Activated CD4-positive, alpha-beta T cell treated with anti-CD3 and anti-CD28 coated beads, Interleukin-2, amount 10 ng/mL, durations not matched to agents 7 days and 5 days (primary cell): ENCODE measurements at regions of chr11 and their contacts with region 1.

Region 1: DNA sequence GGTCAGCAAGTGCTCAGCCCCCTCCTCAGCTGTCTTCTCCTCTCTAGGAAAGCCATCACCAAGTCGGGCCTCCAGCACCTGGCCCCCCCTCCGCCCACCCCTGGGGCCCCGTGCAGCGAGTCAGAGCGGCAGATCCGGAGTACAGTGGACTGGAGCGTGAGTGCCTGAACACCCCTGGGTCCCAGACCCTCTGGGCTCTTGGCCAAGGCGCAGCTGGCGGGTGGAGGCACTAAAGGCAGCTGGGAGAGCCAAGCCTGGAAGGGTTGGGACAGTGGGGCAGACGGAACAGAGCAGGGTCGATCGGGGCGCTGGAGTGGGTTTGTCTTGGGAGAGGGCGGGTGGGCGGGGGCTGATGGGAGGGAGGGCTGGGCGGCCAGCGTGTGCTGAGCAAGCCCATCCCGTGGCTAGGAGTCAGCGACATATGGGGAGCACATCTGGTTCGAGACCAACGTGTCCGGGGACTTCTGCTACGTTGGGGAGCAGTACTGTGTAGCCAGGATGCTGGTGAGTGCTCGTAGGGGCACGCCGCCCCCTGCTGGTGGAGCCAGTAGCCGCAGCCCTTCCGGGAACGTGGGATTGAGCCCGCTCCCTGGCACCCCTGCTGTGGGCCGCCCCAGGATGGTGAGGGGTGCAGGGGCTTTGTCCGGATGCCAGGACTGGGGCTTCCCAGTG is 14.1 kb upstream of the MDK start:
- DNase-seq: peak; percentile 74
- H3K4me3 Mint-ChIP-seq: no peak overlapping the region
- H3K27ac Mint-ChIP-seq: no peak overlapping the region
- H3K4me1 Mint-ChIP-seq: peaks cover 33% of the 10 kb centered on the region
- H3K27me3 Mint-ChIP-seq: no peaks in the 10 kb centered on the region

Region 2: DNA sequence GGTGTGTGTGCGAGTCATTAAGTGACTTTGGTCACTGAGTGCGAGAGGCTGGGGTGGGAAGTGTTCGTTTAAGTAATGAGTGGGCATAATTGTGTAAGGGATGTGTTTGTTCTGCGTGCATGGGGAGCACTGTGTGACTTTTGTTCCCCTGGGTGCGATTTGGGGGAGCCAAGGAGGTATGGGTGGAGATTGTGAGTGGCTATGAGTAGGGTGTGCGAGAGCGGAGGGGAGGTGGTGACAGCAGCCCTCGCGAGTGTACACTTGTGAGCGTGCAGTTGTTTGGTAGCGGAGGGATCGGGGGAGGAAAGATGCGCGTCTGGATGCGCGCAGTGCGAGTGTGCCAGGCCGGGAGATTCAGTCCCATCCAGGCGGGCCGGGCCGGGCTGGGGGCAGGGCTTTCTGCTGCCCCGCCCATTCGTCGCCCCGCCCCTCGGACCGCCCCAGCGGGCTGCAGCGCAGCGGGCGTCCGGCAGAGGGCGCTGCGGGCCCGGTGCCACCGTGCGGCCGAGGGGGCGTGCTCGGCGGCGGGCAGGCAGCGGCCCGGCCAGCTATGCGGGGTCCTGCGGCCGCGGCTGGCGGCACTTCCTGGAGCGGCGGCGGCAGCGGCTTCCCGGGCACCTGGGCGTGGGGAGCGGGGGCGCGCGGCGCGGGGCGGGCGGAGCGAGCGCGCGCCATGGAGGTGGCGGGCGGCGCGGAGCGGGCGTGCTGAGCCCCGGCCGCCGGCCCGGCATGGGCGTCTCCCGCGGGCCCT is 20.3 kb before region 1 on chr11 and contains the start of gene DGKZ:
- CTCF ChIA-PET with region 1: interaction called, 280 read pairs
- POLR2A ChIA-PET with region 1: interaction called, 3 read pairs
- DNase-seq: peak; percentile 84
- H3K4me3 Mint-ChIP-seq: peak within 1 kb of the TSS; percentile 85
- H3K27ac Mint-ChIP-seq: peak within 1 kb of the TSS; percentile 91
- H3K4me1 Mint-ChIP-seq: peaks cover 80% of the 10 kb centered on the region
- H3K27me3 Mint-ChIP-seq: peaks cover 2% of the 10 kb centered on the region
- total RNA-seq, gene DGKZ: 178 to 187 TPM

Region 3: GRCh38 chr11:46380340-46381047 is 13.1 kb after region 1 on chr11:
- CTCF ChIA-PET with region 1: interaction called, 11 read pairs
- POLR2A ChIA-PET with region 1: no interaction called
- DNase-seq: peak; percentile 76
- H3K4me3 Mint-ChIP-seq: peak overlapping the region; percentile 69
- H3K27ac Mint-ChIP-seq: peak overlapping the region; percentile 57
- H3K4me1 Mint-ChIP-seq: peaks cover 11% of the 10 kb centered on the region
- H3K27me3 Mint-ChIP-seq: peaks cover 17% of the 10 kb centered on the region

Region 4: GRCh38 chr11:46438211-46438610 is 70.8 kb after region 1 on chr11:
- CTCF ChIA-PET with region 1: no interaction called
- POLR2A ChIA-PET with region 1: no interaction called
- DNase-seq: no peak
- H3K4me3 Mint-ChIP-seq: no peak overlapping the region
- H3K27ac Mint-ChIP-seq: no peak overlapping the region
- H3K4me1 Mint-ChIP-seq: no peaks in the 10 kb centered on the region
- H3K27me3 Mint-ChIP-seq: no peaks in the 10 kb centered on the region